Psoas muscle (tissue), 8 donors: ENCODE measurements at regions of chr1 and their contacts with region 1.

Region 1: DNA sequence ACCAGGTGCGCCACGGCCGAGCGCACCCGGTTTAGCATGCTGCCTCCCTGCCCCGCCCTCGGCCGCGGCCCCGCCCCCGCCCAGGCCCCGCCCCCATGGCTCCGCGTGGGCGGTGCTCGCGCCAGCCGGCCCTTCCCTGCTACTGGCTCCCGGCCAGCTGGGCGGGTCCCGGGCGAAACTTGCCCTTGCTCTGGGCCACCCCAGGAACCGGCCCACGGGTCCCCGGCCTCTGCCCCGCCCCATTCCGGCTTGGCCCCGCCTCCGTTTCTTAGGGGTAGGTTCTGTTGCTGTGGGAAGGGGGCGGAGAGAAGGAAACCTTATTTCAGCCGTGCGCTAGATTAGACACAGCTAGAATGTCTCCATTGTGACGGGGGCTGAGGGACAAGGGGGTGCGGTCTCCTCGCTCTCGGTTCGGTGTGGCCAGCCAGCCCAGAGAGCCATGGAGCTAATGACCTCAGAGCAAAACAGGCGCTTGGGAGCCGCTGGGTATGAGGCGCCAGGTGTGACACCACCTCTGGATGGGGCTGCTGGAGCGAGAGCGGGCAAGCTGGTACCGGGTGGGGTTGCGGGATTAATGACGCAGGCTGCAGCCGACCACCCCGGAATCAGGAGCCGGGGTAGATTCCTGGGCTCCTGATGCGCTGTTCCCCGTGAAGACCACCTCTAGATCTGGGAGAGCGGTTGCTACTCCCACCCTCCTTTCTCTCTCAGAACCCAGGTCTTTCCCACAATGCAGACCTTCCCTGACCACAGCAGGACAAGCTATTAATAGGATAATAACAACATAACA is at the start of gene PPM1J:
- DNase-seq: peak; percentile 99
- ATAC-seq: peak; percentile 82 to 84 (median 83)
- H3K4me3 ChIP-seq: peak within 1 kb of the TSS; percentile 92
- H3K27ac ChIP-seq: peak within 1 kb of the TSS; percentile 80
- H3K4me1 ChIP-seq: peaks cover 18% of the 10 kb centered on the region
- H3K27me3 ChIP-seq: no peaks in the 10 kb centered on the region
- CTCF ChIP-seq: no peak
- total RNA-seq, gene PPM1J: 4.1 to 7.2 (median 6.1) TPM

Region 2: GRCh38 chr1:112390775-112391602 is 324.5 kb before region 1 on chr1:
- intact Hi-C with region 1: loop called in 1 of 2 experiments (anchors 5 kb)
- DNase-seq: peak; percentile 83 to 85
- ATAC-seq: peak; percentile 85 to 95 (median 90)
- H3K4me3 ChIP-seq: peak overlapping the region; percentile 58
- H3K27ac ChIP-seq: peak overlapping the region; percentile 58
- H3K4me1 ChIP-seq: peaks cover 5% of the 10 kb centered on the region
- H3K27me3 ChIP-seq: peaks cover 0 to 4% (median 0%) of the 10 kb centered on the region in 3 donors
- CTCF ChIP-seq: peak; percentile 91

Region 3: DNA sequence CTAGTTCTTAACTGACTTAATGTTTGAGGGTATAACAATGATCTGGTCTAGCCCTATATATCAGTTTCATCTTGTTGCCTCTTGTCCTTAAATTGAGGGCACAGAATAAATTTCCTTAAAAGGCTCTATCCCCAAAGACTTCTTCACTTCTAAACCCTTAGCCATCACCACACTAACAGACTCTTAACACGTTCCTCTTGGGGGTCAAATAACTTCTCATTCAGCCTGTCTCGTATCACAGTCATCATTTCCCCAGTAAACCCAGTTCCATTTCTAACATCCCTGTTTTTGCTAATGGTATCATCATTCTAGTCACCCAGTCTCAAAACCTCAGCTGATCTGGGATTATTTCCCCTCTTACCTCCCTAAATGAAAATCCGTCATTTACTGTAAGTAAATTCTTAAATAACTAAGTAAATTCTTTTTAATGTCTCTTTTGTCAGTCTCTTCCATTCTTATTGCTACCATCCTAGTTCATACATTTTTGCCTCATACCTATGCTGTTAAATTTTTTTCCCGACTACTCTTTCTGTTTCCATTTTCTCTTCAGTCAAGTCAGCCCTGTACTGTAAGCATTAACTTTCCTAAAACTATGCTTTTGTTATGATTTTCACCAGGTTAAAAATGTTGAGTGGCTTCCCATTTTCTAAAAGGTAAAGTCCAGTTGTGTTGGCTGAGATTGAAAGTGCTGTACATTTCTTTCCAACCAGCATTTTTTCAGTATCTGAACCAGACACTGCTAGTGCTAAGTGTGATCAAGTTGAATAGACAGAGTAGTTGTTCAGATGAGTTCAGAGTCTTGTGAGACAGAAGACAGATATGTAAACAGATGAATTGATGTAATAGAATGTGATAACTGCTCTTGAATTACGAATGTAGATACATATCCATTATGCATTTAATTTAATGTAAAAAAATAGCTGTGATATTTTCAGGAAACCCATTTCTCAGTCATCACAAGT is 312.5 kb before region 1 on chr1:
- intact Hi-C with region 1: no loop called
- DNase-seq: no peak
- ATAC-seq: no peak
- H3K4me3 ChIP-seq: no peak overlapping the region
- H3K27ac ChIP-seq: no peak overlapping the region
- H3K4me1 ChIP-seq: peaks cover 4% of the 10 kb centered on the region
- H3K27me3 ChIP-seq: no peaks in the 10 kb centered on the region
- CTCF ChIP-seq: no peak

Region 4: DNA sequence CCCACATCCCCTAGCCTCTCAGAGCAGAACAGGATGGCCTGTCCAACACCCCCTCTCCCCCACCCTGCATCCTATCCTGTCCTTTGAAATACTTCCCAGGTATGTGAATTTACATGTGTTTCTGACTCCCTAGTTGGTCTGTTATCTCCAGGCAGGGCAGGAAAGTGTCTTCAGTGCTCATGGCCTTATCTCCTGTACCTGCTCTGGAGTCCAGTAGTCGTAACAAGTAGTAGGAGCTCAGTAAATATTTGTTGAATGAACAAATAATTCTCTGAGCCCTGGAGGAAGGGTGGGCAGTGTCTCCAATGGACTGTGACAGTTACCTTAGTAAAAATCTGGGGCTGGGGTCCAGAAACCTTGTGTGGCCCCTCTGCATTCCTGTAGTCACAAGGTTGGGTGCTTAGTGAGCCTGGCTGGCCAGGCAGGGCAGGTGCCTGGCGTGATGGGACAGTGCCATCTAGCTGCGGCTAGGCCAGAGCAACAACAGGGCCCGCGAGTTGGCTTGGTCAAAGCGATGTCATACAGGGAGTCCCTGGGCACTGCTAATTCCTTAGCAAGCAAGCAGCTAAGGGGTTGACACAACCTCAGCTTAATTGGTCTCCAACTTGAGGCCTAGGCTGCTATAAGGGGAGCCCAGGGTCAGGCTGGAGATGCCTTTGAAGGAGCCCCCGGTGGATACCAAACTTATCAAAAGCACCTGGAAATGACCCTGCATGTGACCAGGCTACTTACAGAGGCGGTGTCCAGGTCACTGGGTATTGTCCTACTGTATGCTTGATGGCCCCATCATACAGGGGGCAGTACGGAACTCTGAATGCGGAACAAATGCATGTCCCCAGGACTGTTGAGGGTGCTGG is 88.7 kb after region 1 on chr1:
- intact Hi-C with region 1: loop called (anchors 1 kb)
- DNase-seq: peak; percentile 56 to 84
- ATAC-seq: peak; percentile 78 to 85 (median 83)
- H3K4me3 ChIP-seq: no peak overlapping the region
- H3K27ac ChIP-seq: no peak overlapping the region
- H3K4me1 ChIP-seq: peaks cover 8% of the 10 kb centered on the region
- H3K27me3 ChIP-seq: no peaks in the 10 kb centered on the region
- CTCF ChIP-seq: peak; percentile 75

Region 5: GRCh38 chr1:112833806-112834205 is 118.3 kb after region 1 on chr1:
- intact Hi-C with region 1: no loop called
- DNase-seq: no peak
- ATAC-seq: no peak
- H3K4me3 ChIP-seq: no peak overlapping the region
- H3K27ac ChIP-seq: no peak overlapping the region
- H3K4me1 ChIP-seq: no peaks in the 10 kb centered on the region
- H3K27me3 ChIP-seq: no peaks in the 10 kb centered on the region
- CTCF ChIP-seq: no peak

Region 6: GRCh38 chr1:112955781-112956543 is 240.5 kb after region 1 on chr1 and contains the start of gene SLC16A1:
- intact Hi-C with region 1: loop called in 1 of 2 experiments (anchors 10 kb)
- DNase-seq: peak; percentile 95 to 96
- ATAC-seq: peak; percentile 87 to 93 (median 90)
- H3K4me3 ChIP-seq: peak within 1 kb of the TSS; percentile 77
- H3K27ac ChIP-seq: peak within 1 kb of the TSS; percentile 96
- H3K4me1 ChIP-seq: peaks cover 21% of the 10 kb centered on the region
- H3K27me3 ChIP-seq: no peaks in the 10 kb centered on the region
- CTCF ChIP-seq: peak; percentile 12
- total RNA-seq, gene SLC16A1: 42.3 to 78.9 (median 53.3) TPM

Region 7: DNA sequence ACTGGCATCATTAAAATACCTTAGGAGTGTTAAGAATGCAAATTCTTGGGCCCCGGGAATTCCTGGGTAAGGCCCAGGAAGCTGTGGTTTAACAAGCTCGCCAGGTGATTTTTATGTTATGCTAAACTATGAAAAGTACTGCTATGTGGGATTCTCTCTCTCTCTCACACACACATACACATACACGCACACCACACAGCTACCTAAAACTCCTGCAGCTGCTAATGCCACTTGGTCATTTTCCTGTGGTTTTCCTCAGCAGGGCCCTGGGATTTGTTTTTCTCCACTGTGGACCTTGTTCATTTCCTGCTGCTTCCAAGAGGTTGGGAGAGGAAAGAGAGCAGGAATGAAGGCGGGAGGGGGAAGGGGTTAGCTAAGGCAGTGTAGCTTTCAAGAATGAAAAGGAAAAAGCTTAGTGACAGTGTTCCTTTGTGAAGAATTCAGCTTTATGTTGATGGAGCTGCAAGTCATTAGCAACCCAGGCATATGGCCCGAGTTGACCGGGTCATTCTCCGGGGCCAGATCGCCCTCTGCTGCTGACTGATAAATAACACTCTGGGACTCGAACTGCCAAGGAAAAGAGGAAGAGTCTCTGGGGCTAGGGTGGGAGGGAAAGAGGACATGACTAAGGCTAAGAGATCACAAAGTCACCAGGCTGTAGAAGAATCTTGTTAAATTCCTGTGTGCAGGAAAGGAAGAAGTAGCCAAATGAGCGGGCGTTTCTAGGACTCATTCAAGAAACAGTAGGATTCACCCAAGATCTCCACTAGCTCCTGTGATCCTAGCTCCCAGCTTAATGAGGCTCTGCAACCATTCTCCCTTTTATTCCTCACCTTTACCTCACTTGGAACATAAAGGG is 327.1 kb after region 1 on chr1:
- intact Hi-C with region 1: loop called (anchors 2 to 5 kb)
- DNase-seq: peak; percentile 71 to 82
- ATAC-seq: peak; percentile 91 to 97 (median 94)
- H3K4me3 ChIP-seq: no peak overlapping the region
- H3K27ac ChIP-seq: no peak overlapping the region
- H3K4me1 ChIP-seq: peaks cover 7% of the 10 kb centered on the region
- H3K27me3 ChIP-seq: no peaks in the 10 kb centered on the region
- CTCF ChIP-seq: peak; percentile 66

Region 8: DNA sequence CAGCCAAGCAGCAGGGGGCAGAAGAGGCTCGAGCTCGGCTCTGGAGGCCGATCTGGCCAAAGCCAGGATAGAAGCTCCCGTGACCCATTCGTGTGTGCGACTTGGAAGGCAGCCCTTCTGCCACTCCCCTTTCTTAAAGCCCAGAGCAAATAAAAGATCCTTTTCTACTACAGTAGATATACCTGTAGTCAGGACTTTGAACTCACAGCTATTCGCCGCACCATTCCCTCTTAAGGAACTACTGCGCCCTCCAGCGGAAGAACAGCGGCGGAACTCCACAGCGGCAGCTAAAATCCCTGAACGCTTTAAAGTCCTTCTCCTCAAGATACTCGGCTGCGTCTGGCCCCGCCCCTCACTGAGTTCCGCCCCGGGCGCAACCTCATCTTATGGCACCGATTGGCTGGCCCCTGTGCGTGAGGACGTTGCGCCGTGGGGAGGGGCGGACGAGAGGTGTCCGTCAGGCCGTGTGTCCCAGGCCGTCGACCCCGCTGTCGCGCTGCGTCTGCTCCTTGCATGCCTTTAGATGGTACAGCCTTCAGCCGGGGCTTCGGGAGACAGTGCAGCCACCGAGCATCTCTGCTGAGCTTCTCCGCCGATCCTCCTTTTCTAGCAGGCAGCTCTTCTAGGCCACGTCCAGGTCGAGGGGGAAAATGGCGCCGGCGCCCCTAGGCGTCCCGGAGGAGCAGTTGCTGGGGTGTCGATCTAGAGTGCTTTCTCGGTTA is 357.5 kb after region 1 on chr1 and contains the start of gene LRIG2:
- intact Hi-C with region 1: loop called in 1 of 2 experiments (anchors 2 kb)
- DNase-seq: peak; percentile 99
- ATAC-seq: peak; percentile 99 to 100 (median 100)
- H3K4me3 ChIP-seq: peak within 1 kb of the TSS; percentile 98
- H3K27ac ChIP-seq: peak within 1 kb of the TSS; percentile 92
- H3K4me1 ChIP-seq: peaks cover 24% of the 10 kb centered on the region
- H3K27me3 ChIP-seq: no peaks in the 10 kb centered on the region
- CTCF ChIP-seq: peak; percentile 80
- total RNA-seq, gene LRIG2: 3.4 to 6.0 (median 5.0) TPM

Region 9: GRCh38 chr1:113677250-113678158 is 962.0 kb after region 1 on chr1:
- intact Hi-C with region 1: loop called in 1 of 2 experiments (anchors 5 kb)
- DNase-seq: peak; percentile 21 to 58
- ATAC-seq: peak; percentile 83 to 96 (median 92)
- H3K4me3 ChIP-seq: no peak overlapping the region
- H3K27ac ChIP-seq: no peak overlapping the region
- H3K4me1 ChIP-seq: peaks cover 6% of the 10 kb centered on the region
- H3K27me3 ChIP-seq: no peaks in the 10 kb centered on the region
- CTCF ChIP-seq: peak; percentile 63